Endothelial cell of umbilical vein (primary cell): ENCODE measurements at regions of chr11 and their contacts with region 1.

Region 1: DNA sequence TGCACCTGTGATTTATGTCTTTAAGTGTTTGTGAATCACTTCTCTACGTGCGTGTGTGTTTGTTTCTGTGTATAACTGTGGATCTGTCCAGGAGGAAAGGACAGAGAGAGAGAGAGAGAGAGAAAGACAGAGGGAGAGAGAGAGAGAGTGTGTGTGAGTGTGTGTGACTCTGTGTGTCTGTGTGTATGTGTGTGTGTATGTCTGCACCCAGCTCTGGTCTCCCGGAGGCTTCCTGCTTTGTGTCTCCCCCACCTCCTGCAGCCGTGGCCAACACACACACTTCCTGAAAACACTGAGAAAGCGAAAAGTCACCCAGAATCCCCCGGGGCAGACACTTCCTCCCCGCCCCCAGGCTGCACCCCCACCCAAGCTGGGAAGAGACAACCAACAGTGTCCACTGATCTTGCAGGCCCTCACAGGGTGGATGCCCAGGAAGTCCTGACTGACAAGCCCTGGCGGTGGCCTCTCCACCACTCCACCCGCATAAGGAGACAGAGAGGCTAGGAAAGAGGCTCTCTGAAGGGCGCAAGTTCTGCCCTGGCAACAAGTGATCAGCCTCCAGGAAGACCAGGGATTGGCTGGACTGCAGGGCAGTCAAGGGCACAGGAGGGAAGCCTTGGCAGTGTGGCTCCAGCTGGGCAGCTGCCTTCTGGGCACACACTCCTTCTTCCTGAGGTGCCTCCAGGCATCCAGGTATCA is 30.0 kb downstream of the ARAP1 start:
- DNase-seq: peak; percentile 95
- H3K4me3 ChIP-seq: peak overlapping the region; percentile 29 to 70 (median 55)
- H3K27ac ChIP-seq: peak overlapping the region; percentile 83
- H3K4me1 ChIP-seq: peaks cover 25% of the 10 kb centered on the region
- H3K27me3 ChIP-seq: no peaks in the 10 kb centered on the region
- CTCF ChIP-seq: no peak
- POLR2A ChIP-seq: peak; percentile 88

Region 2: GRCh38 chr11:72744474-72744873 is 22.3 kb after region 1 on chr11:
- CTCF ChIA-PET with region 1: interaction called, 15 read pairs
- POLR2A ChIA-PET with region 1: no interaction called
- dilution Hi-C with region 1: no loop called
- intact Hi-C with region 1: no loop called
- DNase-seq: no peak
- H3K4me3 ChIP-seq: no peak overlapping the region
- H3K27ac ChIP-seq: no peak overlapping the region
- H3K4me1 ChIP-seq: no peaks in the 10 kb centered on the region
- H3K27me3 ChIP-seq: no peaks in the 10 kb centered on the region
- CTCF ChIP-seq: no peak
- POLR2A ChIP-seq: no peak

Region 3: DNA sequence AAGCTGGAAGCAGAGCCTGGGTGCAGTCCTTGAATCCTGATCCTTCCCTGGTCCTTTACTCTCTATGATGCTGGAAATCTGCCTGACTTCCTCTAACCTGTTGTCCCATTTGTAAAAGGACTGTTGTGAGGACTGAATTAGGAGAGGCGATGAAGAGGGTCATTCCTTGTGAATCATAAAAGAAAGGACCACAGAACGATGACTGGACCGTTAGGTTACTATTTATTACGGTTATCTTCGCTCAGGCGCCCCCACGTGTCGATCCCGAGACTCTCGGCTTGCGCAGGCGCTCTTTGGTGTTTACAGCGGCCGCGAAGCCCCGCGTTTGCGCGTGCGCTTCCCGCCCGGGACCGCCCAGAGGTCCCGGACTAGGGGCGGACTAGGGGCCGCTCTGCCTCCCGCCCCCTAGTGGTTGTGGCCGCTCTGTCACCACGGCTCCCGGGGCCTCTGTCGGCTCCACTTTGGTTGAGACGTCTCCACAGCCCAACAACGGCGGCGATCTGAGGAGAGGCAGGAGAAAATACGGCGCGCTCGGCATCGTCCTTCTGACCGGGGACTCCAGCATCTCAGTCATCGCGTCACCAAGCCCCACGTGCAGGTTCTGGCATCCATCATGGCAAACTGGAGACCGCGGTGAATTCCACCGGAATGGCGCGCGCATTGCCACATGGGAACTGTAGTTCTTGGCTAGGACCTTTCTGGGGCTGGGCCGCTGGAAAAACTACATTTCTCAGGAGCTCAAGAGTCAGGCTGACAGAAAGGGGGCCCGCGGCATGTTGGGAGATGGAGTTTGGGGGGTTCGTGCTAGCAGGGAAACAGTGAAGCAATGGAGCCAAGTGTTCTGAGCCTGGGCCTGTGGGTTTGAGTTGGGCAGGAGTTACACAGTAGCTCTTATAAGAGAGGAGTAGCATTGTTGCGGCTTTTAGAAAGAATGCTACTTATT is 71.5 kb after region 1 on chr11 and contains the start of gene STARD10:
- CTCF ChIA-PET with region 1: interaction called, 136 read pairs
- POLR2A ChIA-PET with region 1: interaction called, 4 read pairs
- dilution Hi-C with region 1: no loop called
- intact Hi-C with region 1: loop called (anchors 1 kb)
- DNase-seq: peak; percentile 96
- H3K4me3 ChIP-seq: peak within 1 kb of the TSS; percentile 66 to 85 (median 71)
- H3K27ac ChIP-seq: peak within 1 kb of the TSS; percentile 84
- H3K4me1 ChIP-seq: peaks cover 3% of the 10 kb centered on the region
- H3K27me3 ChIP-seq: no peaks in the 10 kb centered on the region
- CTCF ChIP-seq: peak; percentile 99
- POLR2A ChIP-seq: peak; percentile 75
- total RNA-seq, gene STARD10: 14.4 and 16.1 TPM in 2 replicates

Region 4: GRCh38 chr11:72831513-72832300 is 109.5 kb after region 1 on chr11:
- CTCF ChIA-PET with region 1: interaction called, 33 read pairs
- POLR2A ChIA-PET with region 1: no interaction called
- dilution Hi-C with region 1: no loop called
- intact Hi-C with region 1: no loop called
- DNase-seq: peak; percentile 80
- H3K4me3 ChIP-seq: no peak overlapping the region
- H3K27ac ChIP-seq: no peak overlapping the region
- H3K4me1 ChIP-seq: peaks cover 9% of the 10 kb centered on the region
- H3K27me3 ChIP-seq: no peaks in the 10 kb centered on the region
- CTCF ChIP-seq: peak; percentile 91 to 97
- POLR2A ChIP-seq: no peak

Region 5: DNA sequence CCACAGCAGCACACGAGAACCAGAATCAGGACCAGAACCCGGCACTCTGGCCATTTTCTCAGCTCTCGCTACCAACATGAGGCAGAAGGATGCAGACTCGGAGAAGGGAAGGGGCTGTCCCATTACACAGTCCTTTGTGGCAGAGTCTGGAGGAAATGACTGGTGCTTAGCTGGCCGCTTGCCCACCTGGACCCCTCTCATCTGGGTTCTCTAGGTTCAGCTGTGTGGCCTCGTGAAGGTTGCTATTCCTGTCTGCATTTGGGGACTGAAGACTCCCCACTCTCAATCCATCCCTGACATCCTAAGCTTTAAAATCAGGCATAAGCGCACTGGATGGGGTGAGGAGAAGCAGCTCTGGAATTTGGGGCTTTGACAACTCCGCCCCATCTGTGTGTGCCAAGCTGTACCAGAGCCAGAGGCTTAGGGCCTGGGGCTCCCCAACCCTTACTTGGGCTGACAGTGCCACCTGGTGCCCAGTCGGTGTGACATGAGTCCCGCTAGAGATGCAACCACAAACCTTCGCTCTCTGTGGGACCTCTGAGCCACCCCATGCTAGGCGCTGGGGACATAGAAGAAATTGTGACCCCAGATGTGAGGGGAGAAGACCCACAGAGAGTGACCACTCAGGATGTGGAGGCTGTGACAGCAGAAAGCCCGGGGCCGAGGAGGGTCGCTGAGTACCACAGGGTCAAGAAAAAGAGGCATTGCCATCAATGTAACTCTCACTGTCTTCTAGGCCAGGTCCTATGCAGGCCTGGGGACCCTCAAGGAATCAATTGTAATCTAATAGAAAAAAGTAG is 455.8 kb after region 1 on chr11:
- CTCF ChIA-PET with region 1: interaction called, 77 read pairs
- POLR2A ChIA-PET with region 1: no interaction called
- dilution Hi-C with region 1: no loop called
- intact Hi-C with region 1: loop called (anchors 1 kb)
- DNase-seq: peak; percentile 94
- H3K4me3 ChIP-seq: no peak overlapping the region
- H3K27ac ChIP-seq: peak overlapping the region; percentile 90
- H3K4me1 ChIP-seq: peaks cover 28% of the 10 kb centered on the region
- H3K27me3 ChIP-seq: no peaks in the 10 kb centered on the region
- CTCF ChIP-seq: peak; percentile 76 to 85
- POLR2A ChIP-seq: no peak

Region 6: DNA sequence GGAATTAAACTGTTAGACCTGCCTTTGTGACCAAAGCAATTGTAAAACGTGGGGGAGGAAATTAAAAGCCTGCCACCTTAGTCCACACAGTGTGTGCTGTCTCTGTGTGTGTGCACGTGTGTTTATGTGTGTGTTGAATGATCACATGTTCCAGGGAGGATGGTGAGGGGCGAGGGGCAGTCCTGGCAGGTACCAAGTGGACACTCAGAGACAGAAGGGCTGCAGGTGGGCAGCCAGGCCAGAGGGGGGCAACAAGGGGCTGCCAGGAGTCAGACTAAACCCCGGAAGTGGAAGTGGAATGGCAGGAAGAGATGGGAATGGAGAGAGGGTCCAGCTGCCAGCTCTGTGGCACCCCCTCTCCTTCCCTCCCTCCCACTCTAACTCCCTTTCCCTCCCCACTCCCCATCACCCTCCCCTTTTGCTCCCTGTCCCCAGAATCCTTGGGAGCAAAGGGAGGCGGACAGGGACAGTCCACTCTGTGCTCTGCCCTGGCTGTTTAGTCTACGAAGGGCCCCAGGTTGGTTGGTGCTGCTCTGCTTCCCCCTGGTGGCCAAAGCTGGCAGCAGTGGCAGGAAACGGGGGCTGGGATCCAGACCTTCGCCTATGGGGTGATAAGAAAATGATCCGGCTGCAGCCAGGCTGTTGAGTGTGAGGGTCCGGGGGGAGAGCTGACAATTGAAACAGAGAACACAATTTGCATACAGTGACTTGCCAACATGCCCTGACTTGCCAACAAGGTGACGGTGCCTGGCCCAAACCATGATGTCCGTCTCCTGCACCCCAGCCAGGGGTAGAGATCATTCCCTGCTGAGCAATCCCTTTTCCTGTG is 520.3 kb after region 1 on chr11:
- CTCF ChIA-PET with region 1: interaction called, 13 read pairs
- POLR2A ChIA-PET with region 1: no interaction called
- dilution Hi-C with region 1: no loop called
- intact Hi-C with region 1: loop called (anchors 1 kb)
- DNase-seq: peak; percentile 84
- H3K4me3 ChIP-seq: no peak overlapping the region
- H3K27ac ChIP-seq: no peak overlapping the region
- H3K4me1 ChIP-seq: peaks cover 11% of the 10 kb centered on the region
- H3K27me3 ChIP-seq: no peaks in the 10 kb centered on the region
- CTCF ChIP-seq: peak; percentile 88 to 89
- POLR2A ChIP-seq: no peak